Left cardiac atrium (tissue), 4 donors: ENCODE measurements at regions of chr12 and their contacts with region 1.

Region 1: DNA sequence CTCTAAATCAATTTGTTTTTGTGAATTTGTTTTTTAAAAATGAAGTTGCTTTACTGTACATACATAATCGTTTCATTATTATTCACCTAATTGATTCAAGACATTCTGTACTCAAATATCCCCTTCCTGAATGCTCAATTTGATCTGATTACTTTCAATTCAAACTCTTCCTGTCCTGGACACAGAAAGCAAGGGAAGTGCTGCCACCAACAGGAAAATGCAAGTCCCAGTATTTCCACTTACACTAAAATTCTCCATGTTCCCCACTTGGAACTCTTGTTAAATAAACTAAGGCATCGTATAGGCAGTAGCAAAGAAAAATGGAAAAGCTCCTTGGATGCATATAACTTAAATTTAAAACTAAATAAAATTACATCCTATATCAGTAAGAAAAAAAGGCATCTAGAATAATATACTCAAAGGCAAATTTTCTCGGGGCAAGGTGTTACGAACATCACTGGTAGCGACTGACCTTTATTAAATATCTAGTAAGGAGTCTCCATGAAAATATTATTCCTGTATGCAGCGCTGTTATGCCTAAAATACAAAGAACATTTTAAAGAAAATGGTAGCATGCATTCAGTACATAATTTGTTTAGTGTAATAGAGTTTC is 72.0 kb upstream of the DBX2 start:
- DNase-seq: no peak
- ATAC-seq: peak in 1 of 2 donors; percentile 41

Region 2: GRCh38 chr12:44972746-44973421 is 150.0 kb before region 1 on chr12:
- intact Hi-C with region 1: loop called in 1 of 2 experiments (anchors 10 kb)
- DNase-seq: no peak
- ATAC-seq: no peak